ENCODE measurements at regions of chr11 and their contacts with region 1.

Region 1: GRCh38 chr11:10405855-10406592 is 49.0 kb upstream of the AMPD3 start:
- DNase-seq: peak; percentile 92
- H3K4me3 ChIP-seq: no peak overlapping the region
- H3K27ac ChIP-seq: no peak overlapping the region
- H3K4me1 ChIP-seq: peaks cover 0 to 22% (median 19%) of the 10 kb centered on the region in 4 donors
- H3K27me3 ChIP-seq: no peaks in the 10 kb centered on the region
- CTCF ChIP-seq: peak; percentile 77 to 90 (median 78)
- EP300 ChIP-seq: no peak
- POLR2A ChIP-seq: no peak

Region 2: DNA sequence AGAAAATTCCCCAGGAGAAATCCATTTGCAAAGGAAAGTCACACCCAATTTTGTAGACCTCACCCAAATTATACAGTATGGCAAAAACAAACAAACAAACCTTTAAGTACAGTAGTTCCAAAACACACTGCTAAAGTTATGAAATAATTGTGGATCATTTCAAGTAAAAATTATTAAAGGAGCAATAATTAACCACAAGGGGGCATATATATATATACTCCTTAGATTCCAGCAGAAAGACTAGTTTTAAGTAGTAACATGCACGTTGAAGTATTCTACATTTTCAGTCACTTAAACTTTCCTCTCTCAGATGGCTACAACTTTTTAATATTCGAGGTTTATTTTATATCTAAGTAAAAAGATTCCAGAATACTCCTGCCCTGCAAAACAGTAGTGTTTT is 108.2 kb after region 1 on chr11:
- intact Hi-C with region 1: loop called (anchors 10 kb)
- DNase-seq: no peak
- H3K4me3 ChIP-seq: no peak overlapping the region
- H3K27ac ChIP-seq: no peak overlapping the region
- H3K4me1 ChIP-seq: peaks cover 0 to 13% (median 8%) of the 10 kb centered on the region in 4 donors
- H3K27me3 ChIP-seq: no peaks in the 10 kb centered on the region
- CTCF ChIP-seq: peak; percentile 41 to 51 (median 43)
- EP300 ChIP-seq: no peak
- POLR2A ChIP-seq: no peak

Region 3: DNA sequence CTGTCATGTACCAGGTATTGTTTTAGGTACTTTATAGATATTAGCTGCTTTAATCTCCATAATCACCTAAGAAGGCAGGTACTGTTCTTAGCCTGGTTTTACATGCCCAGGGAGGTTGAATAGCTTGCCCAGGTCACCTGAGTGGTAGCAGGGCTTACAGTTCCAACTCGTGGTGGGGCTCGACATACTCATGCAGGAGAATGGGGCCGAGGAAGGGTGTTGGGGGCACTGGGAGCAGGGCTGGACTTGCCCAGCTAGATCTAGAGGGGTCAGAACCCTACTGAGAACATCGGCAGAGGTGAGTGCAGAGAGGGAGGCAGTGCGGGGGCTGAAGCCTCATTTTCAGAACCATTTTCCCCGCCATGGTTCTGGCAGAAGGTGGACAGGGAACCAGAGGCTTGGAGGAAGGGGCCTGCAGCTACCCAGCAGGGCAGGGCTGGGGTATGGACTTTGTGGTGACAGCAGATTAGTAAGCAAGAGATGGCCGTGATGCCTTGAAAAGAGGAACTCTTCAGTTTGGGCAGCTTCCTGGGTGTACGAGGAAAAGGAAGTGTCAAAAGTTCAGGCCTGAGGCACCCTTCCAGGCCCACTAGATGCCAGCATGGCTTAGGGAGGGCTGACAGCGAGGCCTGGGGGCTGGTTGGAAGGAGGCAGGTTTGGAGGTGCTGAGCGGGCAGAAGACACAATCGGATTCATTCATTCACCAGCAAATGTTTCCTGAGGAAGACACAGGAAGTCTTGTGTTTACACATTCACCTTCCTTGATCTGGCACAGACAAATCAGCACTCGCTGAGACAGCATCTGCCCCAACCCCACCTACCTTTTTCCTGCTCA is 217.2 kb after region 1 on chr11:
- intact Hi-C with region 1: no loop called
- DNase-seq: no peak
- H3K4me3 ChIP-seq: no peak overlapping the region
- H3K27ac ChIP-seq: peak overlapping the region; percentile 80 to 89 (median 86)
- H3K4me1 ChIP-seq: peaks cover 26 to 86% (median 69%) of the 10 kb centered on the region in 4 donors
- H3K27me3 ChIP-seq: no peaks in the 10 kb centered on the region
- CTCF ChIP-seq: no peak
- EP300 ChIP-seq: no peak
- POLR2A ChIP-seq: no peak

Measured in esophagus muscularis mucosa (tissue), 4 donors.